Mammary epithelial cell (primary cell): ENCODE measurements at regions of chr6 and their contacts with region 1.

Region 1: DNA sequence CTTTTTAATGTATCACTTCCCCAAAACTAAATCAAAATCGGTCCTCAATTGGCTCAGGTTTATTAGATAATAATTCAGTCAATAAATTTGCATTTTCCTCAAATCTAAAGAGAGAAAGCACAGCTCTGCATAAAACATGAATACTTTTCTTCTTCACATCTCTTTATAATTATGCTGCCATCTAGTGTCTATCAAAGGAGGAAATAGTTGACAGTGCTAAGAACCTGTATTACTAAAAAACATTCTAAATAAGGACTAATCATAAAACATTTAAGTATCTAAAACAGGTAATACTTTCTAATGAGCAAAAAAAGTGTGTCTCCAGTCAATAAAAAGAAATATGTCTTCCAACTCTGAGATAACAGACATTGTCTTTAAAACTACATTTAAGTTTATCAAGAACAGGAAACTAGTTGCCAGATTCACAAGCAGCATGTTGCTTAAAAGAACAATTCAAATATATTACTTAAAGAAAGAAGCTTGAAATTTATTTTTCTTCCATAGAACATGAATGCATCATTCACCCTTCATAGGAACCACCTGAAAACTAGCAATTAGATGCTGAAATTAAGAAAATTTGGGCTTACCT is 56.5 kb upstream of the DST start:
- DNase-seq: no peak
- H3K4me3 ChIP-seq: no peak overlapping the region
- H3K27ac ChIP-seq: no peak overlapping the region
- H3K4me1 ChIP-seq: peaks cover 8% of the 10 kb centered on the region
- H3K27me3 ChIP-seq: no peaks in the 10 kb centered on the region
- CTCF ChIP-seq: peak; percentile 44 to 53

Region 2: DNA sequence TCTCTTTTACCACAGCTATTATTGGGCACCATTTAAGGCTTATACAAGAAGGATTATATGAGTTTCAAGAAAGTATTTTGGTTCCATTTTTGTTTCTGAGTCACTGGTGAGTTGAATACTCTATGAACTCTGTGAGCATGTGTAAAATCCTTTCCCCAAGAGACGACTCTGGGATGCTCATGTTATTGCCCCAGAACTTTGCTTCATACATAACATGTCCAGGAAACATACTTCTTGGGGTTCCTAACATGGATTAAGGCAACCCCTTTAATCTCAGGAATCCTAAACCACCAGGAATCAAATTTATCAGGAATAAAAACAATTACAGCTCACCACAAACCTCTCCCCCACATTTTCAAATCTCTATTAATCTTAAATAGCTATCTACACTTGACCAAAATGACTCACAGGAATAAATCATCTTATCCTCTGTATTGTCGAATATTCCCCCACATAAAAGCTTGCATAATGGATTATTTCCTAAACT is 334.3 kb before region 1 on chr6:
- CTCF ChIA-PET with region 1: no interaction called
- dilution Hi-C with region 1: no loop called
- in situ Hi-C with region 1: no loop called
- intact Hi-C with region 1: loop called (anchors 10 kb)
- DNase-seq: peak; percentile 68
- H3K4me3 ChIP-seq: no peak overlapping the region
- H3K27ac ChIP-seq: peak overlapping the region; percentile 33
- H3K4me1 ChIP-seq: peaks cover 28% of the 10 kb centered on the region
- H3K27me3 ChIP-seq: no peaks in the 10 kb centered on the region
- CTCF ChIP-seq: no peak

Region 3: GRCh38 chr6:56475736-56476457 is 223.3 kb before region 1 on chr6:
- CTCF ChIA-PET with region 1: no interaction called
- dilution Hi-C with region 1: no loop called
- in situ Hi-C with region 1: no loop called
- intact Hi-C with region 1: no loop called
- DNase-seq: no peak
- H3K4me3 ChIP-seq: no peak overlapping the region
- H3K27ac ChIP-seq: no peak overlapping the region
- H3K4me1 ChIP-seq: no peaks in the 10 kb centered on the region
- H3K27me3 ChIP-seq: no peaks in the 10 kb centered on the region
- CTCF ChIP-seq: no peak

Region 4: DNA sequence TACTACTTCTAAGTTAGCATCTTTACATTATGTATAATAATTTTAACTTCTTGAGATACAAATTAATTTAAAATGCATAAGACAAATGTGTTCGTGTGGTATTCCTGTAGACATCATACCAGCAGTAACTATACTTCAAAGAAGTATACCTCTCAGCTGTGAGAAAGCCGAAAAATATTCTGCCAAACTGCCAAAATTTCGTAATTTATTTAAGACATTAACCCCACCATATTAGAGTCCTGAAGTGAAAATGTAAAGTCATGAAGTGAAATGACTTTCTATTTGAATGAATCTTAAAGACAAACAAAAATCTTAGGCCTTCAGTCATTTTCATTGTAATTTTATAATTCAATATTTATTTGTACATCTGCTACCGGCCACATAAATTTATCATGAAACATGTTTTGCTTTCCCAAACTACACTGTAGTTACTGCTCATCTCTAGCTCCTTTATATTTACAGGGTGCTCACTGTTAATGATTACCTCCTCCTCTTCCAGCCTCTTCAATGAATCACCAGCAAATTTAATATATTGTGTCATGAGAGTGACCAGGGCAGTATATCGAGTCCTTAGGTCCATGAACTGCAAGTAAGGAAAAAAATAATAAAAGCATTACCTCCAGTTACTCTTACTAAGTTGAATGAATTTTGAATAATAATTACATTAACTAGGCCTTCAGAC is 75.0 kb before region 1 on chr6:
- CTCF ChIA-PET with region 1: no interaction called
- dilution Hi-C with region 1: no loop called
- in situ Hi-C with region 1: no loop called
- intact Hi-C with region 1: loop called (anchors 5 kb)
- DNase-seq: no peak
- H3K4me3 ChIP-seq: no peak overlapping the region
- H3K27ac ChIP-seq: no peak overlapping the region
- H3K4me1 ChIP-seq: no peaks in the 10 kb centered on the region
- H3K27me3 ChIP-seq: no peaks in the 10 kb centered on the region
- CTCF ChIP-seq: no peak

Region 5: GRCh38 chr6:56671651-56672461 is 27.3 kb before region 1 on chr6:
- CTCF ChIA-PET with region 1: no interaction called
- dilution Hi-C with region 1: no loop called
- in situ Hi-C with region 1: no loop called
- intact Hi-C with region 1: loop called (anchors 2 kb)
- DNase-seq: no peak
- H3K4me3 ChIP-seq: no peak overlapping the region
- H3K27ac ChIP-seq: no peak overlapping the region
- H3K4me1 ChIP-seq: peaks cover 32% of the 10 kb centered on the region
- H3K27me3 ChIP-seq: no peaks in the 10 kb centered on the region
- CTCF ChIP-seq: no peak

Region 6: DNA sequence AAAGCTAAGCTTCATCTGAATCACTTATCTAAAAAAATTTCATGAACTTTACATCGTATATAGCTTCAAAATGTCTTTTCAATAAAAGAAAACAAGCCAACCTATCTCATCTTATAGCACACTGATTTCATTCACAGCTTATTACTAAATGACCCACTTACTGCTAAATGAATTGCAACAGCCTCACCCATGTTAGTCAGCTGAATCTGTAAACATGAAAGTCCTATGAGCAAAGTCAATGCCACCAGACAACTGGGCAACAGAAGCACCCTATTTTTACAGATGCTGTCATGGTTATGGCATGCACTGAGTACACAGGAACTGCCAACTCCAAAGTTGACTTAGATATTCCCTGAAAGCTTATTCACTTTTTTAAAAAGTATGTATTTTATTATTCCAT is 15.3 kb before region 1 on chr6:
- CTCF ChIA-PET with region 1: interaction called, 3 read pairs
- dilution Hi-C with region 1: no loop called
- in situ Hi-C with region 1: no loop called
- intact Hi-C with region 1: loop called (anchors 2 kb)
- DNase-seq: peak; percentile 89
- H3K4me3 ChIP-seq: no peak overlapping the region
- H3K27ac ChIP-seq: peak overlapping the region; percentile 43
- H3K4me1 ChIP-seq: peaks cover 15% of the 10 kb centered on the region
- H3K27me3 ChIP-seq: no peaks in the 10 kb centered on the region
- CTCF ChIP-seq: no peak

Region 7: DNA sequence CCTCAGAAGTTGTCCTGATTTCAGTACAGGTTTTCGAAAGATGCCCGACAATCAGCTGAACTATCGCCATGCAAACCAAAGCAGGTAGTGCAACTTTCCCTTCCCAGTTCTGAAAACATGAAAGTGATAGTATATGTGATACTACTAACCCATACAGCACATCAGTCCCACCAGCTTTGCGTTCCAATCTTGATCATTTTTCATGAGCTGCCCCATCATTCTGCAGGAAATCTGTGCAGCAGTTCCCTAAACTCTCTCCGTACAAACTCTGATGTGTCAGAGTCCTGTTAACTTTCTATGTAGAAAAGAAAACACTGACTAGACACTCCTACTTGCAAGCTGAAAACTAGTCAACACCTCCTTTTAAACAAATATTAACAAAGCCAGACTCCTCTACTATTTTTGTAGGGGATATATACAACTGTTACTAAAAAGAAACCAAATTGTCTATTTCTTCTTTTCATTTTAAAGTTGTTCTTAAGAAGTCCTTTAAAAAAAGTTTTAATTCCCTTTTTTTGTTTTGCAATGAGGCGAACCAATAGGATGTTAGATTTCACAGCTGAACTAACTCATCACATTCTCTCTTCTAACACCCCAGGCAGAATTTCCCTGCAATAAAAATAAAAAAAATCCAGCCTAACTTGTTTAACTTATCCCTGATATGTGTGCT is 43.1 kb after region 1 on chr6:
- CTCF ChIA-PET with region 1: no interaction called
- dilution Hi-C with region 1: no loop called
- in situ Hi-C with region 1: no loop called
- intact Hi-C with region 1: no loop called
- DNase-seq: peak; percentile 55
- H3K4me3 ChIP-seq: peak overlapping the region; percentile 49 to 73 (median 66)
- H3K27ac ChIP-seq: peak overlapping the region; percentile 68
- H3K4me1 ChIP-seq: peaks cover 44% of the 10 kb centered on the region
- H3K27me3 ChIP-seq: no peaks in the 10 kb centered on the region
- CTCF ChIP-seq: no peak

Region 8: DNA sequence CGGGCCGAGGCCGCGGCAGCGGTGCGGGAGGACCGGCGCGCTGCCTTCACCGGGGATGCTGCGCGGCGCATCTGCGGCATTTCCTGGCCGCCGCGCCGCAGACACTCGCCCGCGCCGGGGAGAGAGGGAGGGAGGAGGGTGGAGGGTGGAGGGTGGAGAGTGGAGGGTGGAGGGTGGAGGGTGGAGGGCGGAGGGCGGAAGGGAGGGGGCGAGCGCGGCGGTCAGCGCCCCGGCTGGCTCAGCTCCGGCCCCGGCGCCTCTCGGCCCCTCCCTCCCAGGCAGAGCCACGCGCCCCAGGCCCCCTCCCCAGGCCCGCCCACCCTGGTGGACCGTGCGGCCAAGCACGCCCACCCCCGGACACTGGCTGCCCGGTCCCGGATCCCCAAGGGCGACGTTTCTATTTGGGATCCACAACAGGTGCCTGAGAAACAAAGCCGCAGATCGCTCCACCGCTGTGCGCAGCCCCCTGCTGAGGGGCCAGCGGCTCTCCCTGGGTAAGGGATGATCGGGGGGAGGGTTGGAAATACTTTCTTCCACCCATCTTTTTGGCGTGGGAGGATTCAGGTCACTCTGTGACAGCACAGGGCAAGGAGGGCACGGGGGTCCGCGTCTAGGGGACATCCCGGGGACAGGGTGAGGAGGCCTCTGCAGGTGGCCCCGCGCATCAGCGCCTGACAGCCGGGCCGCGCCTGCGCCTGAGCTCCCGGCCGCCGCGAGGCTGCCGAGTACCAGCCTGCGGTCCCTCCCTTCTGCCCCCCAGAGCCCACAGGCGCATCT is 144.6 kb after region 1 on chr6:
- CTCF ChIA-PET with region 1: no interaction called
- dilution Hi-C with region 1: no loop called
- in situ Hi-C with region 1: no loop called
- intact Hi-C with region 1: no loop called
- DNase-seq: peak; percentile 81
- H3K4me3 ChIP-seq: peak overlapping the region; percentile 70 to 82 (median 73)
- H3K27ac ChIP-seq: peak overlapping the region; percentile 36
- H3K4me1 ChIP-seq: peaks cover 20% of the 10 kb centered on the region
- H3K27me3 ChIP-seq: no peaks in the 10 kb centered on the region
- CTCF ChIP-seq: peak; percentile 49 to 73